ENCODE measurements at regions of chr10 and their contacts with region 1.

Region 1: GRCh38 chr10:113563306-113564088 is 10.6 kb downstream of the HABP2 start:
- DNase-seq: peak; percentile 79
- ATAC-seq: peak; percentile 91
- H3K4me3 Mint-ChIP-seq: peak overlapping the region; percentile 43
- H3K27ac Mint-ChIP-seq: no peak overlapping the region
- H3K4me1 Mint-ChIP-seq: peaks cover 4% of the 10 kb centered on the region
- H3K27me3 Mint-ChIP-seq: peaks cover 18% of the 10 kb centered on the region

Region 2: DNA sequence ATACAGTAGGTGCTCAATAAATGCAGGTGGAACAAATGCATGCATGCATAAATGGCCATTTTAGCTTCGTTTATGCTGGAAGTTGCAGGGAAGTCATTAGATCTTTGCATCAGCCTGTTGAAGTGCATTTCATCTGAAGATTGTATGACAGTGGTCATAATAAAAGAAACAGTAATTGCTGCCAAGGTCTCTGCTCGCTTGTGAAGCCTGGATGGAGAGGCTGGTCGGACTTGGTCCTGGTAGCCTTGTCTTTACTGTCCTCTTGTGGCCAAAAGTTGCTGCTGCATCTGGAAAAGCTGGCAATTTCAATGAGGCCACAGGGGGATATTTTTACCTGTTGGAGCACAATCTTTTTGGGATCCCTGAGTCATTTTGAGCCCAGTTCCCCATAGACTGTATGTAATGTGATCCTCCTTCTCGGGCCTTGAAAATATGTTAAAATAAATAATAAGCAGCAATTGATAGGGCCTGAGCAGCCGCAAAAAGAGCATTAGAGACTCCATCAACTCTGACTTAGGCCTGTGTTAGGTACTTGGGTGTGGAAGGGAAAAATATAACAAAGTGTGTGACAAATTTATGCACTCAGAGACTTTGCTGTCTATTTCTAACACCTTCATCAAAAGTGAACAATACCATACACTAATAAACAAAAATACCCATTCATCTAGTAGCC is 42.2 kb before region 1 on chr10:
- CTCF ChIA-PET with region 1: interaction called, 14 read pairs
- DNase-seq: peak; percentile 50
- ATAC-seq: peak; percentile 45
- H3K4me3 Mint-ChIP-seq: no peak overlapping the region
- H3K27ac Mint-ChIP-seq: no peak overlapping the region
- H3K4me1 Mint-ChIP-seq: no peaks in the 10 kb centered on the region
- H3K27me3 Mint-ChIP-seq: peaks cover 18% of the 10 kb centered on the region

Region 3: DNA sequence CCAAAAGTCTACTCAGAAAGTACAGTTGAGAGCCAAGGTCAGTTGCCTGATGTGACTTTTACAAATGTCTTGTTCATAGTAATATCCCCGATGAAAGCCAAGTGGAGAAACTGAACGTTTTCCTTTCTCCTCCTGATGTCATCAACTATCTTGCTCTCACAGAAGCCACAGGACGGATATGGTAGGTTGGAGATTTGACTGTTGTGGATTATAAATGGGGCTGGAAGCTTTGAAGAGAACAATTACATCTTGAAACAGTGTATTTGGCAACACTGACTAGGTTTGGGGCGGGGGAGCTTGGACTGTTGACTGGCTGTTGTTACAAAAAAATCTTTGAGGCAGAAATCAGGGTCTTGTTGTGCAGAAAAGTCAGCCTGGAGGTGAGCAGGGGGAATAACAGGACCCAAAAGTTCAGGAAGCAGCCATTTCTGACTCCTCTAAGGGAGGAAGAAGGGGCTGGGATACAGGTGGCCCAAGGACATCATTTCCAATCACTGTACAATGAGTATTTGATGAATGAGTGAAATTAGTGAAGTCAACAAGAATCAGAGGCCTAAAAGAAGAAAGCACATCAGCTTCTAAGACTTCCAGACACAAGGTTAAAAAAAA is 212.3 kb after region 1 on chr10:
- CTCF ChIA-PET with region 1: no interaction called
- DNase-seq: no peak
- ATAC-seq: no peak
- H3K4me3 Mint-ChIP-seq: no peak overlapping the region
- H3K27ac Mint-ChIP-seq: no peak overlapping the region
- H3K4me1 Mint-ChIP-seq: peaks cover 5% of the 10 kb centered on the region
- H3K27me3 Mint-ChIP-seq: peaks cover 31% of the 10 kb centered on the region